Activated T-helper 1 cell treated with anti-CD3 and anti-CD28 coated beads, Interleukin-12 subunit alpha, Interleukin-12 subunit beta, Interleukin-2, Interleukin-4 antibody, amounts not matched to agents 30 ng/mL and 10 ng/mL and 1 ng/mL, durations not matched to agents 14 hours and 24 hours and 36 hours (primary cell): ENCODE measurements at regions of chr3 and their contacts with region 1.

Region 1: GRCh38 chr3:9792405-9793160 is at the starts of genes ARPC4 and TADA3:
- DNase-seq: peak; percentile 89
- H3K4me3 Mint-ChIP-seq: peak within 1 kb of the TSS; percentile 99
- H3K27ac Mint-ChIP-seq: peak within 1 kb of the TSS; percentile 100
- H3K4me1 Mint-ChIP-seq: peaks cover 57% of the 10 kb centered on the region
- H3K27me3 Mint-ChIP-seq: no peaks in the 10 kb centered on the region
- total RNA-seq, gene ARPC4: 268 and 273 TPM in 2 replicates
- total RNA-seq, gene TADA3: 63.4 and 63.6 TPM in 2 replicates

Region 2: DNA sequence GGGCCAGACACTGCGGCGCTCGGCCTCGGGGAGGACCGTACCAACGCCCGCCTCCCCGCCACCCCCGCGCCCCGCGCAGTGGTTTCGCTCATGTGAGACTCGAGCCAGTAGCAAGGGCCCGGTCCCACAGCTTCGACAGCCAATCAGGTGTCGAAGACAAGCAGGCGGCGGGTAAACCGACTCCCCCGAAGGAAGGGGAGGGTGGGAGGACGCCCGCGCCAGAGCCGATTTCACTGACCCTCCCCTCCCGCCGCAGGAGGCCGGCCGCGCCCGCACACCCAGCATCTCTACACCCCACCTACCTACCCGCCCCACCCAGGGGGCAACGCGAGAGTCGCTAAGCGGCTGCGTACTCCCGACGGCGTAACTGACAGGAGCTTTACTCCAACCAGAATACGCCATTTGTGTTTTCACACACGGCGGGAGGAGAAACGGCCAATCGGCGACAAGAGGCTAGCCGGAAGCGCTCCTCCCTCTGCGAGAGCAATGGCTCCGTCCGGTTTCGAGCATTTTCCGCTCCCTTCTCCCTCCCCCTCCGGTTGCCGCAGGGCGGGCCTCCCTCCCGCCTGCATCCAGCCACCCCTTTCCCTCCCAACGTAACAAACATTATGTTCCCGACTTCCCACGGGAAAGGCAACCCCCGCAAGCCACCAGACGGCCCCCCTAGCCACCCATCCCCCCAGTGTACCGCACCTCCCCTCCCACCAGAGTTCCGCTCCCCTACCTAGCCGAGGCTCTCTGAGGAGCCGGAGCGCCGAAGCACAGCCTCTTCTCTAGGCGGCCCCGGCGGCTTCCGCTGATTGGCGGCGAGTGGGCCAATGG is 395.7 kb before region 1 on chr3:
- intact Hi-C with region 1: loop called (anchors 1 kb)
- DNase-seq: peak; percentile 98
- H3K4me3 Mint-ChIP-seq: peak overlapping the region; percentile 94
- H3K27ac Mint-ChIP-seq: peak overlapping the region; percentile 98
- H3K4me1 Mint-ChIP-seq: peaks cover 65% of the 10 kb centered on the region
- H3K27me3 Mint-ChIP-seq: no peaks in the 10 kb centered on the region

Region 3: DNA sequence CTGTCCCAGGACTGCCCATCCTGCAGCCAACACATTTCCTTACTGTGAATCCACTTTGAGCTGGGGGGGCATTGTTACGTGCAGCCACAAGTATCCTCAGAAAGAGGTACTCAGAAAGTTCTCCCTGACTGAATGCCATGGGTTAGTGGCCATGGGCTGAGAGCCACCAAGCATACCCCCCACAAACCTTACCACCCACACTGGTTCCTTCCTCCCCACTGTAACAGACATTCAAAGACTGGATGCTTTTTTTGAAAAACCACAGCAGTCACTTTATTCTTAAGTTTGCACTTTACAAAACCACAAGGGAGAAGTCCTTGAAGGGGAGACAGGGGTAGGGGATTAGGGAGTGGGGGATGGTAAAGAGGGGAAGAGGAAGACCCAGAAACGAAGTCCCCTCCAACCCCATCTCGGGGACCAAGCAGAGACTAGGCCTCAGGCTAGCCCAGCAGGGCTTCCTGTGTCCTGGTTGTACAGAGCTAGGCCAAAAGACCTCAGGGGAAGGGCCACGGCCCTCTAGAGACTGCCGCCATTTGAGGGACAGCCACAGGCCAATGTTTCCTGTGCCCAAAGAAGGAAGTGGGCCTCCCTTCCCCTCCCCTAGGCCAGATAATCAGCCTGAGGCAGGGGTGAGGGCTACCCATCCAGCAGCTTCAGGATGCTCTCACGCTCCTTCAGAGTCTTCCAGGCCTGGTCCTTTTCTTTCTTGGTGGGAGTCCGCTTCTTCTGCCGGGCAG is 12.7 kb before region 1 on chr3:
- intact Hi-C with region 1: loop called (anchors 1 kb)
- DNase-seq: peak; percentile 23
- H3K4me3 Mint-ChIP-seq: peak overlapping the region; percentile 31
- H3K27ac Mint-ChIP-seq: peak overlapping the region; percentile 90
- H3K4me1 Mint-ChIP-seq: peaks cover 55% of the 10 kb centered on the region
- H3K27me3 Mint-ChIP-seq: no peaks in the 10 kb centered on the region

Region 4: GRCh38 chr3:9951962-9952805 is 159.6 kb after region 1 on chr3 and contains the start of gene PRRT3:
- intact Hi-C with region 1: loop called (anchors 5 kb)
- DNase-seq: peak; percentile 57
- H3K4me3 Mint-ChIP-seq: peak within 1 kb of the TSS; percentile 90
- H3K27ac Mint-ChIP-seq: peak within 1 kb of the TSS; percentile 40
- H3K4me1 Mint-ChIP-seq: peaks cover 14% of the 10 kb centered on the region
- H3K27me3 Mint-ChIP-seq: no peaks in the 10 kb centered on the region
- total RNA-seq, gene PRRT3: 16.4 and 16.8 TPM in 2 replicates

Region 5: GRCh38 chr3:10115326-10116137 is 322.9 kb after region 1 on chr3 and contains the start of gene BRK1:
- intact Hi-C with region 1: loop called (anchors 1 kb)
- DNase-seq: peak; percentile 90
- H3K4me3 Mint-ChIP-seq: peak within 1 kb of the TSS; percentile 99
- H3K27ac Mint-ChIP-seq: peak within 1 kb of the TSS; percentile 96
- H3K4me1 Mint-ChIP-seq: peaks cover 31% of the 10 kb centered on the region
- H3K27me3 Mint-ChIP-seq: peaks cover 2% of the 10 kb centered on the region
- total RNA-seq, gene BRK1: 97.2 and 105 TPM in 2 replicates